ENCODE measurements at regions of chr2 and their contacts with region 1.

Region 1: DNA sequence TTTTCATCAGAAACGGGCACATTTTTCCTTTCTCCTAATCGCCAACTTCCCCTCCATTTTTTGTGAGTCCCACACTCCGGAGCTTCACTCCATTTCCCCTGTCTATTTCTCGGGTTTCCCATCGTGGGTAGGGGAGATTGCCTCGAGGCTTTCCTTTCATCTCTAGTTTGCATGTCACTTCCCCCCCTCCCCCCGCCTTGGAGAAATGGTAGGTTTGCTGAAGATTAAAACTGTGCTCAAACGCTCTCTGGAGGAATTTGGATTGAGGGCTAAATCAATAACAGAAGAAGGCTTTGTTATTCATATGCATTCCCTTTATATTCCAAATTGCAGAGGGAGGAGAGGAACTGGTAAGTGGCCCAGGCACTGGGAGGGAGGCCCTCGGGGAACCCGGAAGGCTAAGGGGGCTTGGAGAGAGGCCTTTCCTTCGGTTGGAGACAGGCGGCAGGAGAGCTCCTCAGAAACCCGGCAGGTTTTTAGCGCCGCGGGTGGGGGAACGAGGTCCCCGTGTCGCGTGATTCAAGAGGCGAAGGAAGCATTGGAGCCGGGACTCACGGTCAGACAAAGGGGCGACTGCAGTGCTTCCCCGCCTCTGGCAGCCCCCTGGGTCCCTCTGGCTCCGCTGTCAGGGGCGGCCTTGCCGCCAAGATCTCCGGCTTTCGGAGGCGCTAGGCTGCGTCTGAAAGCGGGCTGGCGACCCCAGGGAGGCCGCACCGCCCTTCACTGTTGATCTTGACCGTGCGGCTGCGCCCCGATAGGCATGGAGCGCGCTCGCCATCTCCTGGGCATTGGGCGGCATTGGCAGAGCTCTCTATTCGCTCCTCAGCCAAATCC is 2.4 kb upstream of the HOXD12 start:
- DNase-seq: peak; percentile 92
- H3K4me3 ChIP-seq: peak overlapping the region; percentile 48 to 59
- H3K27ac ChIP-seq: no peak overlapping the region
- H3K4me1 ChIP-seq: peaks cover 0 to 25% of the 10 kb centered on the region in 2 experiments; a peak in 2 of 4 replicates
- H3K27me3 ChIP-seq: peaks cover 94% of the 10 kb centered on the region
- CTCF ChIP-seq: peak; percentile 80
- EP300 ChIP-seq: no peak
- RAD21 ChIP-seq: peak; percentile 85

Region 2: DNA sequence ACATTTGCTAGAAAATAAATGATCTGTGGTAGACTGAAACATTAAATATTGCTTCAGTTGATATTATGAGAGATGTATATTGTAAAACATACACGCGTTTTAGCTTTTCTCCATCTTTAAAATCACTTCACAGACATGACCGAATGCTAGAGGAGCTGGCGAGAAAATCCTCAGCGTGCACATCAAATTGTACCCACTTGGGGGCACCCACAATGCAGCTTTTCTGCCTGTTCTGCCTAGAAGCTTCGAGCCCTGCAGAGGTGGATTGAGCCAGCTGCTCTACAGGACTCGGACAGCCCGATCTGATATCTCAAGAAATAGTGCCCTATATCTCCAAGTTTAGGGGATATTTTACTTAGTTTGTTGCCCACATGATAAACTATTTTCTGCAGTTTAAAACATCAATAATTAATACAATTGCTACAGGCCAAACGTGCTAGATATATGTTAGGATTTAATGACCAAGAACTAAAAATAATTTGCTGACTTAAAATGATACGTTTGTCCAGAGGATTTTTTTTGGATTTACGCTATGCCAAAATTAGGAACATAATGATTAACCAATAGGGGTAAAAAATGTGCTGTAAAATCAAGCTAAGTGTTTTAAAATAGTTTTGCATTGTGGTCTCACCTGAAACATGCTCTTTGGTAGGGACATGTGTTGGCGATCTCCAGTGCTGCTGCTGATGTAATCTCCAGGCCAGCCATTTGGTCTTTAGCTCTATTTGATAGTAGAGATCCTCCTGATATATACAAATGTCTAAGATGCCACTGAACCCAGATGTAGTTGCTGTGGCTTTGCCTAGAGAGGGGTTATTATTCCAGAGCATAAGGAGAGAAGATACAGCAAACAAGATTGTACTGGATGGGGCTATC is 893.3 kb before region 1 on chr2:
- CTCF ChIA-PET with region 1: interaction called, 27 read pairs
- POLR2A ChIA-PET with region 1: no interaction called
- DNase-seq: peak; percentile 56
- H3K4me3 ChIP-seq: peak overlapping the region in 1 of 2 experiments; percentile 26; a peak in 1 of 4 replicates
- H3K27ac ChIP-seq: no peak overlapping the region
- H3K4me1 ChIP-seq: peaks cover 0 to 8% of the 10 kb centered on the region in 2 experiments; a peak in 2 of 4 replicates
- H3K27me3 ChIP-seq: no peaks in the 10 kb centered on the region
- CTCF ChIP-seq: peak; percentile 67
- EP300 ChIP-seq: peak in 1 of 2 experiments; percentile 18; a peak in 1 of 4 replicates
- RAD21 ChIP-seq: peak; percentile 73

Region 3: DNA sequence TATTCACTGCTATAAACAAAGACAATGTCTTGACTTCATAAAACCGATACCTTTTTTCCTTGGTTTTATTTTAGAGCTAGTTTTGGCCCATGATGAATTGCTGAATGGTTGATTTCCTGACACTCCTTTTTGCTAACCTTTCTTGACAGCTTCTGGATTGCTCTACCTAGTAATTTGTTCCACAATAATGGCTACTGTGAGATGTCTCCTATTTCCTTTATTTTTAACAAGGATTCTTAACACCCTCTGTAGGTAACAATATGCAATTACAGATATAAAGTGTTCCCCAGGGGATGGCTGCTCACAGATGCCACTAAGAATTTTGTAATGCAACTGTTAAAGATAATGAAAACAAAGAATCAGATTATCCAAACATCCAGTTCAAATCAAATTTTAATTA is 814.9 kb before region 1 on chr2:
- CTCF ChIA-PET with region 1: interaction called, 14 read pairs
- POLR2A ChIA-PET with region 1: no interaction called
- DNase-seq: peak; percentile 64
- H3K4me3 ChIP-seq: no peak overlapping the region
- H3K27ac ChIP-seq: no peak overlapping the region
- H3K4me1 ChIP-seq: no peaks in the 10 kb centered on the region; a peak in 2 of 4 replicates
- H3K27me3 ChIP-seq: no peaks in the 10 kb centered on the region
- CTCF ChIP-seq: peak; percentile 57
- EP300 ChIP-seq: no peak
- RAD21 ChIP-seq: peak; percentile 73

Region 4: GRCh38 chr2:175366815-175367214 is 730.4 kb before region 1 on chr2:
- CTCF ChIA-PET with region 1: interaction called, 51 read pairs
- POLR2A ChIA-PET with region 1: no interaction called
- DNase-seq: peak; percentile 49
- H3K4me3 ChIP-seq: peak overlapping the region in 1 of 2 experiments; percentile 47; a peak in 1 of 4 replicates
- H3K27ac ChIP-seq: no peak overlapping the region
- H3K4me1 ChIP-seq: peaks cover 0 to 19% of the 10 kb centered on the region in 2 experiments; a peak in 2 of 4 replicates
- H3K27me3 ChIP-seq: no peaks in the 10 kb centered on the region; the same call in 1 of the 2 replicates
- CTCF ChIP-seq: peak; percentile 83
- EP300 ChIP-seq: no peak; a peak in 1 of 4 replicates
- RAD21 ChIP-seq: peak; percentile 94

Region 5: GRCh38 chr2:176079831-176080539 is 17.2 kb before region 1 on chr2:
- CTCF ChIA-PET with region 1: interaction called, 145 read pairs
- POLR2A ChIA-PET with region 1: no interaction called
- DNase-seq: peak; percentile 95
- H3K4me3 ChIP-seq: peak overlapping the region; percentile 39 to 52
- H3K27ac ChIP-seq: no peak overlapping the region
- H3K4me1 ChIP-seq: peaks cover 0 to 23% of the 10 kb centered on the region in 2 experiments; a peak in 1 of 4 replicates
- H3K27me3 ChIP-seq: peaks cover 70% of the 10 kb centered on the region
- CTCF ChIP-seq: peak; percentile 87
- EP300 ChIP-seq: no peak
- RAD21 ChIP-seq: peak; percentile 63

Region 6: DNA sequence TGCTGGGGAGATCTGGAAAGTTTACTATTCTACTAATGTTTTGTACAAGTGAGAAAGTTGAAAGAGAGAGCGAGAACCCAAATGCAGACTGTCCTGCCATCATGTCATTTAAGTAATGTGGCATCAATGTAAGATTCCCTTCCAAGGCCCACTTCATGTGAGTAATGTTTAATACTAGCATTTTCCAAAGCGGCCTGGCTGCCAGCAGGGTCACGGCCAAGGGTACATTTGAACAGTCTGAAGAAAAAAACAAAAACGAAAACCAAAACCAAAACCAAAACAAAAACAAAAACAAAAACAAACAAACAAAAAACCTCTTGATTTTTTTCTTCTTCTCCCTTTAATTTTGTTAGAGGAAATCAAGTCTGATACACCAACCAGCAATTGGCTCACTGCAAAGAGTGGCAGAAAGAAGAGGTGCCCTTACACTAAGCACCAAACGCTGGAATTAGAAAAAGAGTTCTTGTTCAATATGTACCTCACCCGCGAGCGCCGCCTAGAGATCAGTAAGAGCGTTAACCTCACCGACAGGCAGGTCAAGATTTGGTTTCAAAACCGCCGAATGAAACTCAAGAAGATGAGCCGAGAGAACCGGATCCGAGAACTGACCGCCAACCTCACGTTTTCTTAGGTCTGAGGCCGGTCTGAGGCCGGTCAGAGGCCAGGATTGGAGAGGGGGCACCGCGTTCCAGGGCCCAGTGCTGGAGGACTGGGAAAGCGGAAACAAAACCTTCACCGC is 21.6 kb after region 1 on chr2:
- CTCF ChIA-PET with region 1: interaction called, 264 read pairs
- POLR2A ChIA-PET with region 1: interaction called, 3 read pairs
- DNase-seq: peak; percentile 66
- H3K4me3 ChIP-seq: no peak overlapping the region
- H3K27ac ChIP-seq: no peak overlapping the region
- H3K4me1 ChIP-seq: peaks cover 0 to 17% of the 10 kb centered on the region in 2 experiments; a peak in 1 of 4 replicates
- H3K27me3 ChIP-seq: peaks cover 40% of the 10 kb centered on the region
- CTCF ChIP-seq: peak; percentile 66
- EP300 ChIP-seq: no peak
- RAD21 ChIP-seq: peak; percentile 41